AG04449 (cell line): ENCODE measurements at regions of chr10 and their contacts with region 1.

Region 1: GRCh38 chr10:71302874-71303568 is 16.0 kb upstream of the SLC29A3 start:
- DNase-seq: peak; percentile 17
- H3K4me3 ChIP-seq: no peak overlapping the region
- CTCF ChIP-seq: peak; percentile 30

Region 2: DNA sequence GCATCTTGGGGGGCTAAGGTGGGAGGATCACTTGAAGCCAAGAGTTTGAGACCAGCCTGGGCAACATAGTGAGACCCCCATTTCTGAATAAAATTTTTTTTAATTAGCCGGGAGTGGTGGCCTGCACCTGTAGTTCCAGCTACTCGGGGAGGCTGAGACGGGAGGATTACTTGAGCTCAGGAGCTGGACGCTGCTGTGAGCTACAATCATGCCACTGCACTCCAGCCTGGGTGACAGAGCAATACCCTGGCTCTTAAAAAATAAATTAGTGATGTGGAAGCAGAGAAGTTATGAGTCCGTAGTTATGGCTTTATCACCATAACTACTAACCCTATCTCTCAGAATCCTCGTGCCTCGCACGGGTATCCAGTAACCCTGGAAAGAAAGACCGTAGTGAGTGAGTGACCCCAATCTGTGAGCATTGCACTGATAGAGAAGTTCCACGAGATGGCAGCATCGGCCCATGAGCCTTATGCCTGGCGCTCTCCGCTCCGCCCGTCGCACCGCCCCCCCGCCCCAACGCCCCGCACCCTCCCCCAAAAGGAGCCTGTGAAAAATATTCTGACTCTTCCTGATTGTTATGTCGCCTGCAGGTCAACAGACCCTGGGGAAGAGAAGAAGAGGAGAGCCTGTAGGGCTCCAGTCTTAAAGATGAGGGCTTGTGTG is 11.1 kb after region 1 on chr10:
- CTCF ChIA-PET with region 1: interaction called, 30 read pairs
- POLR2A ChIA-PET with region 1: no interaction called
- DNase-seq: no peak
- H3K4me3 ChIP-seq: no peak overlapping the region
- CTCF ChIP-seq: peak; percentile 70